ENCODE measurements at regions of chr3 and their contacts with region 1.

Region 1: GRCh38 chr3:56753206-56753820 is 48.4 kb downstream of the ARHGEF3 start:
- DNase-seq: peak; percentile 84
- ATAC-seq: peak; percentile 92
- H3K4me3 Mint-ChIP-seq: peak overlapping the region; percentile 84
- H3K27ac Mint-ChIP-seq: peak overlapping the region; percentile 83
- H3K4me1 Mint-ChIP-seq: peaks cover 61% of the 10 kb centered on the region
- H3K27me3 Mint-ChIP-seq: no peaks in the 10 kb centered on the region

Region 2: DNA sequence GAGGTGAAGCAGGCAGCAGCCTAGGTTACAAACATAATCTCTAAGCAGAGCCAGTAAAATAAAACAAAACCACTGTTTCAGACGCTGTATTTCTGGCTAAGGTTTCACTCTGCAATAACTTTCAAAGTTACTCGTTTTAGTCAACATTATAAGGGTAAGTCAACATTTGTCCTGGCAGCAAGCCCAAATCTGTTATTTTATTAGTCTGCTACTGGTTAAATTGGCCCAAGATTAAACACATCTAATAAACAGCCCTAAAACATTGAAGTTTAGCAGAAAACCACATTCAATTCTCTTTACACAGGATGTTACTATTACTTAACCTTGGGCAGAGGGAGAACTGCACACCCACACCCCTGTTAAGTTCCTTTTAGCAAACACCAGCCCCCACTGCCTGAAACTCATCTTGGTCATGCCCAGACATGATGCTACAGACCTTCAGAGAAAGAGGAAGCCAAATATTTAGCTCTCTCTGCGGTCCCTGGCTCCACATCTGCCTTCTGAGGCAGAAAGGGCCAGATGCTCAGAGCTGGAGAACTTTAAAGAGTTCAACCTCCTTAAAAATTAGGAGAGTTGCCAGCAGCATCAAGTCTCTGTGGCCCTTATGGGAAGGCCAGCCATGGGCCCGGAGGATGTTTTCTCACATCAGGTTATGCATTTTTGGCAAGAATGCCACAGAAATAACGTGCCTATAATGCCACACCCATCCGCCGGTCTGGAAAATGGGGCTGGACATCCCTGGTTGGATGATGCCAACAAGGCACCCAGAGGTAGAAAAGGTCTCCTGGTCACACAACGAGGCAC is 30.5 kb after region 1 on chr3:
- CTCF ChIA-PET with region 1: interaction called, 19 read pairs
- DNase-seq: peak; percentile 92
- ATAC-seq: peak; percentile 80
- H3K4me3 Mint-ChIP-seq: peak overlapping the region; percentile 58
- H3K27ac Mint-ChIP-seq: peak overlapping the region; percentile 92
- H3K4me1 Mint-ChIP-seq: peaks cover 96% of the 10 kb centered on the region
- H3K27me3 Mint-ChIP-seq: no peaks in the 10 kb centered on the region

Region 3: GRCh38 chr3:56823421-56824343 is 70.4 kb after region 1 on chr3:
- CTCF ChIA-PET with region 1: no interaction called
- DNase-seq: no peak
- ATAC-seq: no peak
- H3K4me3 Mint-ChIP-seq: no peak overlapping the region
- H3K27ac Mint-ChIP-seq: peak overlapping the region; percentile 37
- H3K4me1 Mint-ChIP-seq: peaks cover 38% of the 10 kb centered on the region
- H3K27me3 Mint-ChIP-seq: no peaks in the 10 kb centered on the region

Measured in activated CD8-positive, alpha-beta memory T cell treated with anti-CD3 and anti-CD28 coated beads, Interleukin-2, amount 10 ng/mL, durations not matched to agents 7 days and 5 days (primary cell).